ENCODE measurements at regions of chr5 and their contacts with region 1.

Region 1: DNA sequence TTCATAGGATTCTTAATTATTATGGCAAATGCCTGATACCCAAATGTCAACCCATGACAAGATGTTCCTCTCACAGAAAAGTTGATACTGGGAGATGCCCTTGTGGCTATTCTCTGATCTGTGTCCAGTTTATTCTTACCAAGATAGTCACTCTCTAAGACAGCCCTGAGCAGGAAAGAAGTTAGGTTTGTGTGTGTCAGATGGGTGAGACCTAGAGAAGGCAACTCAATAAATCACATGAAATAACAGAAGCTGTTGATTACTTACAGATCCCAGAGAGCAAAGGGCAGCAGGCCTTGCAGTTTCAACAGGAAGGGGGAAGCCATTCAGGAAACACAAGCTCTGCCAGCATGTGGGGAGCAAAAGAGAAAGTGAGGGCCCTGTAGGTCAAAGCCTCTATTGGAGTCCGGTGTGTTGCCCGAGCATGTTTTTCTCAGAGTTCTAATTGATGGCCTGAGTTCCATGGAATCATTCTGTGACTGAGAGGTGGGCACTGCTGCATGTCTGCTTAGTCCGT is 1193.7 kb upstream of the CDH18 start:
- DNase-seq: no peak
- ATAC-seq: no peak
- H3K4me3 ChIP-seq: no peak overlapping the region
- H3K27ac ChIP-seq: no peak overlapping the region
- H3K4me1 ChIP-seq: no peaks in the 10 kb centered on the region
- H3K27me3 ChIP-seq: no peaks in the 10 kb centered on the region
- CTCF ChIP-seq: no peak

Region 2: DNA sequence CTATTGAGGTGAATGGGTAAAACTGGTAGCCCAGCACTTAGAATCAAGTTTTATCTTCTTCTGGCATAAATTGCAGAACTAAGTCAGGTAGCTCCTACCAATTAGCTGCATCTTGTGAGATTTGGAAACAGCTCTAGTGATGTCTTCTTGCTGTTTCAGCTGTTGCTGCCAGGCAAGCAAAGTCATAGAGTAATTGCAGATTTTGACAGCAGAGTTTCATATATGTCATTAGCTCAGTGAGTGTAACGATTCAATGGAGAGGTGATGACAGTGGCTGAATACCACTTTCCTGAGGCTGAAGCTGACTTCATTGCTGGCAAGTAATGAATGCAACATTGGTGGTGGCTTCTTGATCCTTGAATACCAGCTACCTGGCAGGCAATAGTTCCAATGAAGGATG is 84.0 kb before region 1 on chr5:
- CTCF ChIA-PET with region 1: no interaction called
- POLR2A ChIA-PET with region 1: no interaction called
- intact Hi-C with region 1: no loop called
- DNase-seq: no peak
- ATAC-seq: no peak
- H3K4me3 ChIP-seq: no peak overlapping the region
- H3K27ac ChIP-seq: no peak overlapping the region
- H3K4me1 ChIP-seq: no peaks in the 10 kb centered on the region
- H3K27me3 ChIP-seq: no peaks in the 10 kb centered on the region
- CTCF ChIP-seq: no peak

Region 3: GRCh38 chr5:21649969-21650368 is 468.3 kb after region 1 on chr5:
- CTCF ChIA-PET with region 1: no interaction called
- POLR2A ChIA-PET with region 1: interaction called, 10 read pairs
- intact Hi-C with region 1: no loop called
- DNase-seq: peak; percentile 94
- ATAC-seq: peak; percentile 98
- H3K4me3 ChIP-seq: peak overlapping the region; percentile 14; the same call in 1 of the 2 replicates
- H3K27ac ChIP-seq: peak overlapping the region; percentile 27
- H3K4me1 ChIP-seq: peaks cover 26% of the 10 kb centered on the region
- H3K27me3 ChIP-seq: no peaks in the 10 kb centered on the region
- CTCF ChIP-seq: no peak

Region 4: GRCh38 chr5:21889616-21890015 is 707.9 kb after region 1 on chr5:
- CTCF ChIA-PET with region 1: no interaction called
- POLR2A ChIA-PET with region 1: no interaction called
- intact Hi-C with region 1: no loop called
- DNase-seq: no peak
- ATAC-seq: no peak
- H3K4me3 ChIP-seq: no peak overlapping the region
- H3K27ac ChIP-seq: no peak overlapping the region
- H3K4me1 ChIP-seq: no peaks in the 10 kb centered on the region
- H3K27me3 ChIP-seq: peaks cover 52% of the 10 kb centered on the region
- CTCF ChIP-seq: no peak

Measured in PC-3 (cell line).